BJ (cell line): ENCODE measurements at regions of chr20 and their contacts with region 1.

Region 1: GRCh38 chr20:32652739-32653526 is 20.8 kb downstream of the C20orf203 start:
- DNase-seq: peak; percentile 5
- H3K4me3 ChIP-seq: no peak overlapping the region
- H3K27me3 ChIP-seq: no peaks in the 10 kb centered on the region; the same call in 1 of the 2 replicates
- CTCF ChIP-seq: peak; percentile 94

Region 2: DNA sequence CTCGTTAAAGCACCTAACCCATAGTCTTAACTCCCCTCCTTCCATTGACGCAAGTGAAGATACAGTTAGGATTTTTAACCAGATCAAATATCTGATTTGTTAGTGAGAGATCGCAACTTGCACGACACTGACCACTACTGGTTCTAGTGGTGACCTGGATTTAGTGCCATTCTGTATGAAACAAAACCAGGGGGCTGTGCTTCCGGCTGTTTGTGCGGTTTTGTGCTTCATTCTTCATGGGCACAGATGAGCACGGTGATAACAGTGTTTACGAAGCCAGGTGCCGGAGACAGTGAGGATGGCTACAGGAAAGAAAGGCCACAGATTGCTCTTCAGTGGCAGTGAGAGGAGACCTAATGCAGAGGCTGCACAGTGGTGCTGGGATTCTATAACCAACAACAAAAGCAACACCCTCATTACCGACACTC is 143.3 kb before region 1 on chr20:
- CTCF ChIA-PET with region 1: interaction called, 12 read pairs
- POLR2A ChIA-PET with region 1: no interaction called
- DNase-seq: peak; percentile 39
- H3K4me3 ChIP-seq: no peak overlapping the region
- H3K27me3 ChIP-seq: no peaks in the 10 kb centered on the region
- CTCF ChIP-seq: peak; percentile 37

Region 3: DNA sequence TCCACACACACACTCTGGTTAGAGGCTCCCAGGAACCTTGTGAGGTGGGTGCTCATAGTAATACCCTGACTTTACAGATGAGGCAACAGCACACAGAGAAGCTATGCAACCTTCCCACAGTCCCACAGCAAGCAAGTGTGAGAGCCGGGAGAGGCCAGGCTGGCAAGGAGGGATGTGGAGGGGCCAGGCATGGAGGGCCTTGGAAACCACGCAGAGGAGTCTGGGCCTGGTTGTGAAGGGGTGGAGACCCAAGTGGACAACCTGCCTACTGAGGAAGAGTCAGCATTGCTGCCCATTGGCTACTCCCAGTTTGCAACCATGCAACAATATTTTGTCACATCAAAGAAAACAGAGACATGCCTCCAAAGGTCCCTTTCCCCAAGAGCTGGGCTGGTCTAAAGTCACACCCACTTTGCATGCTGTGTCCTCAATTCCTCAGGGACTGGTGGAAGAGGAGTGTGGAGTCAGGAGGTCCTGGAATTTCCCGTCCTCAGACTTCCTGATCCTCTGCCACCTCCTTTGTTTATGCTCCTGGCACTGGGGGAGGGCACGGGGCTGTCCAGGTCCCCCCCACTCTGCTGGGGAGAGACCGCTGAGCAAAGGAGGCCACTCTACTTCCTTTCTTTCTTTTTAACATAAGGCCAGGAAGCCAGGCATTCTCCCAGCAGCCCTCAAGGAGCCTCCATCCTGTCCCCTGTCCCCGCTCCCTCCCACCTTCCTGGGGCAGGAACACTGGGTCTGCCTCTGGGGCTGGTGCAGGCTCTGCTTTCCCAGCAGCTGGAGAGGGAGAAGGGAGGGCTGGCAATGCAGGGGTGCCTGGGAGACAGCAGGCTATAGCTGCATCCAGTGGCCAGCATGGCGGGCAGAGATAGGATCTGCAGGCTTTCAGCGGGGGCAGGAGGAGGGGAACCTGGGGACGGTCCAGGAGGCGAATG is 136.1 kb before region 1 on chr20:
- CTCF ChIA-PET with region 1: interaction called, 262 read pairs
- POLR2A ChIA-PET with region 1: no interaction called
- DNase-seq: no peak
- H3K4me3 ChIP-seq: no peak overlapping the region
- H3K27me3 ChIP-seq: no peaks in the 10 kb centered on the region
- CTCF ChIP-seq: no peak

Region 4: GRCh38 chr20:32664678-32665159 is 11.8 kb after region 1 on chr20:
- CTCF ChIA-PET with region 1: interaction called, 24 read pairs
- POLR2A ChIA-PET with region 1: no interaction called
- DNase-seq: no peak
- H3K4me3 ChIP-seq: no peak overlapping the region
- H3K27me3 ChIP-seq: no peaks in the 10 kb centered on the region
- CTCF ChIP-seq: no peak

Region 5: DNA sequence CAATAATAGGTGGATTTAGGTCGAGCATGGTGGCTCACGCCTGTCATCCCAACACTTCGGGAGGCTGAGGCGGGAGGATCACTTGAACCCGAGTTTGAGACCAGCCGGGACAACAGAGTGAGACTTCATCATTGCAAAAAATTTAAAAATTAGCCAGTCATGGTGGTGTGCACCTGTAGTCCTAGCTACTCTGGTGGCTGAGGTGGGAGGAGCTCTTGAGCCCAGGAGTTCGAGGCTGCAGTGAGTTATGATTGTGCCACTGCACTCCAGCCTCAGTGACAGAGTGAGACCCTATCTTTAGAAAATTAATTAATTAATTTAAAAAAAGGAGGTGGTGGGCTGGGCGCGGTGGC is 34.2 kb after region 1 on chr20:
- CTCF ChIA-PET with region 1: no interaction called
- POLR2A ChIA-PET with region 1: no interaction called
- DNase-seq: no peak
- H3K4me3 ChIP-seq: no peak overlapping the region
- H3K27me3 ChIP-seq: no peaks in the 10 kb centered on the region
- CTCF ChIP-seq: no peak